MCF 10A (cell line): ENCODE measurements at regions of chr7 and their contacts with region 1.

Region 1: GRCh38 chr7:19117091-19117869 is at the start of gene TWIST1:
- DNase-seq: peak; percentile 68
- H3K4me3 Mint-ChIP-seq: peak within 1 kb of the TSS; percentile 97
- H3K27ac Mint-ChIP-seq: peak within 1 kb of the TSS; percentile 91
- H3K4me1 Mint-ChIP-seq: peaks cover 12% of the 10 kb centered on the region
- H3K27me3 Mint-ChIP-seq: no peaks in the 10 kb centered on the region
- CTCF ChIP-seq: no peak
- total RNA-seq, gene TWIST1: 16.1 and 18.9 TPM in 2 replicates

Region 2: GRCh38 chr7:18590744-18591340 is 526.4 kb before region 1 on chr7:
- CTCF ChIA-PET with region 1: interaction called, 9 read pairs
- POLR2A ChIA-PET with region 1: interaction called, 5 read pairs
- intact Hi-C with region 1: loop called (anchors 1 kb)
- DNase-seq: peak; percentile 57
- H3K4me3 Mint-ChIP-seq: no peak overlapping the region
- H3K27ac Mint-ChIP-seq: no peak overlapping the region
- H3K4me1 Mint-ChIP-seq: no peaks in the 10 kb centered on the region
- H3K27me3 Mint-ChIP-seq: no peaks in the 10 kb centered on the region
- CTCF ChIP-seq: peak; percentile 54

Region 3: DNA sequence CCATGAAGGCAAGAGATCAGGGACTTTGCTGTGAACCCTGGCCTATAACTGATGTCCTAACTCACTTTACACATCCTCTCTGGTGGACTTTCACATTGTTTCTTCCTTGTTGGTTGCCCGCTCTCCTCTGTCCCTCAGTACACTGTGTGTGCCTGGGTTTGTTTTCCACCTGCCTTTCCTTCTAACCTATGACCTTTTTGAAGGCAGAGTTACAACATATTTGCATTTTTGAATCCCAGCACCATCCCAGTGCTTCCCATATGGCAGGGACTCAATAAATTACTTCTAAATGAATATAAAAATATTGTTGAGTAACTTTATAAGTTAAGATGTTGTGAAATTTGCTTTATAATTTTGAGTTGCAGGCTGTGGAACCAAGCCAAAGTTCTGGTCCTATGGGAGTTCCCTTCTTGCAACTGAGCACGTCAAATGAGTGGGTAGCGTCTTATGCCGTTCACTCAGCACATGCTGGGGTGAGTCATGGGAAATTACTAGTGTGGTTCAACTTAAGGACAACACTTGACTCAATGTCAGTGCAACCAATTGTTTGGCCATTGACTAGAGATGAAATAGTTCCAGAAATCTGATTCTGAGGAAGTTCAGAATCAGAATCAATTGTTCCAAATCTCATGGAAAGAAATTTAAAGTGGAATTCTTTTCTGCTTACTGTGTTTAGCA is 250.8 kb before region 1 on chr7:
- CTCF ChIA-PET with region 1: no interaction called
- POLR2A ChIA-PET with region 1: interaction called, 4 read pairs
- intact Hi-C with region 1: loop called (anchors 2 kb)
- DNase-seq: peak; percentile 99
- H3K4me3 Mint-ChIP-seq: no peak overlapping the region
- H3K27ac Mint-ChIP-seq: peak overlapping the region; percentile 78
- H3K4me1 Mint-ChIP-seq: peaks cover 41% of the 10 kb centered on the region
- H3K27me3 Mint-ChIP-seq: no peaks in the 10 kb centered on the region
- CTCF ChIP-seq: no peak

Region 4: GRCh38 chr7:19030281-19030680 is 87.0 kb before region 1 on chr7:
- CTCF ChIA-PET with region 1: no interaction called
- POLR2A ChIA-PET with region 1: no interaction called
- intact Hi-C with region 1: no loop called
- DNase-seq: no peak
- H3K4me3 Mint-ChIP-seq: no peak overlapping the region
- H3K27ac Mint-ChIP-seq: peak overlapping the region; percentile 59
- H3K4me1 Mint-ChIP-seq: peaks cover 16% of the 10 kb centered on the region
- H3K27me3 Mint-ChIP-seq: no peaks in the 10 kb centered on the region
- CTCF ChIP-seq: no peak

Region 5: GRCh38 chr7:19079066-19079465 is 38.2 kb before region 1 on chr7:
- CTCF ChIA-PET with region 1: no interaction called
- POLR2A ChIA-PET with region 1: interaction called, 20 read pairs
- intact Hi-C with region 1: no loop called
- DNase-seq: peak; percentile 75
- H3K4me3 Mint-ChIP-seq: peak overlapping the region; percentile 65
- H3K27ac Mint-ChIP-seq: peak overlapping the region; percentile 88
- H3K4me1 Mint-ChIP-seq: peaks cover 19% of the 10 kb centered on the region
- H3K27me3 Mint-ChIP-seq: no peaks in the 10 kb centered on the region
- CTCF ChIP-seq: no peak

Region 6: DNA sequence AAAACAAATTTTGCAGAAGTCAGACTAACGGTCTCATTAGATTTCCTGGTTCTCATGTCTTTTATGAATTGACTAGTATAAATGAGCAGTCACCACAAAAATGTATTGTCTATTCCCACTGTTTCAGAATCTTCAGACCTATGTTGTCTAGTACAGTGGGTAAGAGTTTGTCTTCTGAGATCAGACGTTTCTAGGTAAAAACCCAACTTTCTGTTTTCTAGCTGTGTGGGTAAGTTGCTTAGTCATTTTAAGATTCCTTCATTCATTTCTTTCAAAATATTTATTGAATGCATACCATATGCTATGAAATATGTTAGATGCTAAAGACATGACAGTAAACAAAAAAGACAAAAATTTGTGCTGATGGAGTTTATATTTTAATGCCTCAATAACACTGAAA is 435.3 kb after region 1 on chr7:
- CTCF ChIA-PET with region 1: interaction called, 6 read pairs
- POLR2A ChIA-PET with region 1: no interaction called
- intact Hi-C with region 1: loop called (anchors 2 kb)
- DNase-seq: no peak
- H3K4me3 Mint-ChIP-seq: no peak overlapping the region
- H3K27ac Mint-ChIP-seq: no peak overlapping the region
- H3K4me1 Mint-ChIP-seq: peaks cover 7% of the 10 kb centered on the region
- H3K27me3 Mint-ChIP-seq: no peaks in the 10 kb centered on the region
- CTCF ChIP-seq: no peak

Region 7: DNA sequence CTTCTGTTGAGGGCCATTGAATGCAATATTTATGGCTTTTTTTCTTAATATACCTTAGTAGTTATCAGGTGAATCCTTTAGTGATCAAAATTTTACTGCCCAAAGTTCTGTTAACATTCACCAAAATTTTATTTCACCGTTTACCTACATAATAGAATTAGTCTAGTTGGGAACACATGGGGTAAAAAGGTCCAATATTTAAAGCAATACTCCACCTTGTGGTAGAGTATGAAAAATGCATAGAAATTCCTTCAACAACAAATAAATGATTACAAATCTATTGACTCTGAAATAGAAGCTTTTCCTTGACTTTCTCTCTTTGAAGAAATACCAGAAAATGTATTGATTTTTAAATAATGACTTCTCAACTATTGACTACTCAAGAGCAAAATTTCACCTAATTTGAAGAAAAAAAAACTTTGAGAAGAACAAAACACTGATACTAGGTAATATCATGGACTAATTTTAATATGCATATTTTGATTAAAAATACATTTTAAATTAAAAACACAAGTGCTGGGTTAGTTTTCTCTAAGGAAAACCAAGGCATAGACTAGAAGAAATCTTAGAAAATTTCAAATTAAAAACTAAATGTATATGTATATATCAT is 548.2 kb after region 1 on chr7:
- CTCF ChIA-PET with region 1: interaction called, 4 read pairs
- POLR2A ChIA-PET with region 1: interaction called, 6 read pairs
- intact Hi-C with region 1: loop called (anchors 1 kb)
- DNase-seq: peak; percentile 51
- H3K4me3 Mint-ChIP-seq: no peak overlapping the region
- H3K27ac Mint-ChIP-seq: no peak overlapping the region
- H3K4me1 Mint-ChIP-seq: peaks cover 23% of the 10 kb centered on the region
- H3K27me3 Mint-ChIP-seq: no peaks in the 10 kb centered on the region
- CTCF ChIP-seq: peak; percentile 48